AG04450 (cell line): ENCODE measurements at regions of chr18 and their contacts with region 1.

Region 1: DNA sequence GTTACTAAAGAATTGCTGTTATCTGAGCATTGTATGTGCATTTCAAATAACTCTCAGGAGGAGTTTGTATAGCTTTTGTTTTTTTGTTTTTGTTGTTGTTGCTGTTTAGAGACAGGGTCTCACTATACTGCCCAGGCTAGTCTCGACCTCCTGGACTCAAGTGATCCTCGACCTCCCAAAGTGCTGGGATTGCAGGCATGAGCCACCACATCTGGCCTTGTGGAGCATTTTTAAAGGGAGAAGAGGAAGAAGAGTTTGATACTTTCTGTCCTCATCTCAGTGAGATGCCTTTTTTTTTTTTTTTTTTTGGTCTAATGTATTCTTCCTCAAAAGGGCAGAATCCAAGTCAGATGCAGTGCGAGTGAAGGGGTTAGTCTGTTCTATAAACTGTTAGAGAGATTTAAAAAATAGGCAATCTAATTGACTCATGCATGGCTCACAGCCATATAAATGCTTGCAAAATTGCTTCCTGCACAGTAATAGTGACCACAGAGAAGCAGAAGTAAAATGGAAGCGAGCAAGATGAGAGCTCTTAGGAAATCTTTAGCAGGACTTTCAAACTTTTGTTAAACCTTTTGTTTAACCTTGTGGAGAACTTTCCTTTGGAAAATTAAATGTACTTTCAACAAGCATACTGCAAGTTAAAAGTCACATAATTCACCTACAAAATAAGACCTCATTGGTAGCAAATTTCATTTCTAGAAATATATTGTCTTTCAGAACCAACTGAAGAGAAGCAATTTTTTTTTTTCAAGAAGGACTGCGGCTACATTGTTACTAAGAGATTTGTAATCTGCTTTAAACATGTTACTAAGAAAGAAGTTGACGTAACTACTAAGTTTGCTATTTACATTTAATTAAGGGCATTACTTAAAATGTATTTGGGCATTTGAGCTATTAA is 52.3 kb upstream of the ROCK1 start:
- DNase-seq: peak; percentile 80
- H3K4me3 ChIP-seq: peak overlapping the region; percentile 15; the same call in 1 of the 2 replicates
- H3K27ac ChIP-seq: peak overlapping the region; percentile 93
- H3K27me3 ChIP-seq: no peaks in the 10 kb centered on the region
- CTCF ChIP-seq: no peak

Region 2: DNA sequence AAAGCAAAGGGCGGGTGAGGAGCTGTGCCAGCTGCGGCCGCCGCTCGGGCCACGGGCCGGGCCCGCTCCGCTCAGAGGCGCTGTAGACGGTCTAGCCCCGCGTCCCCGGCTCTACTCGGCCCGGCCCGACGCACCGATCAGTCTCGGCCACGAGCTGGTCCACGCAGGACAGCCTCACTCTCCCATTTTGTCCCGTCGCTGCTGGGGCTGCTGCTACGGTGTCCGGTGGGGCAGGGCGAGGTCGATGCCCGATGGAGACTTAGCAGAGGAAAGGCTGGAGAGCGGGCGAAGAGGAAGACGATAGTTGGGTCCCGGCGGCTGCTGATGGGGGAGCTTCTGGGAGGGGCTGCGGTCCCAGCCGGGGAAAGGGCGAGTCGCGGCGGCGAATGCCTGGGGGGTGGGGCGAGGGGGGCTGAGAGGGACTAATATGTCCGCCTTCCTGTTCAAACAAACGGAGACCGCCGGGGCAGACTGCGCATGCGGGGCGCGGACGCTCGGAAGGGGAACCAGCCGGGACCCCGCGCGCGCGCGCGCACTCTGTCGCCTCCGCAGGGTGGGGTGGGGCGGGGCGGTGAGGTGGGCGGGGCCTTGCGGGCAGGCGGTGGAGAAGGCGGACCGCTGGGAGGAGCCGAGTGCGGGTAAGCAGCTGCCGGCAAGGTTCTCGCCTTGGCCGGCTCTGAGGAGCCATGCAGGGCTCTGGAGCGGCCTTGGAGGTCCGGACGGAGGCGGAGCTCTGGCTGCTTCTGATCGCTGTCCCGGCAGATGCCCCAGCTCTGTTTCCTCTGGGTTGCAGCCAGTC is 52.4 kb before region 1 on chr18 and contains the start of gene ROCK1:
- CTCF ChIA-PET with region 1: no interaction called
- POLR2A ChIA-PET with region 1: interaction called, 28 read pairs
- DNase-seq: peak; percentile 95
- H3K4me3 ChIP-seq: peak within 1 kb of the TSS; percentile 98
- H3K27ac ChIP-seq: peak within 1 kb of the TSS; percentile 94
- H3K27me3 ChIP-seq: no peaks in the 10 kb centered on the region
- CTCF ChIP-seq: no peak
- polyA plus RNA-seq, gene ROCK1: 28.5 and 37.2 TPM in 2 replicates

Region 3: DNA sequence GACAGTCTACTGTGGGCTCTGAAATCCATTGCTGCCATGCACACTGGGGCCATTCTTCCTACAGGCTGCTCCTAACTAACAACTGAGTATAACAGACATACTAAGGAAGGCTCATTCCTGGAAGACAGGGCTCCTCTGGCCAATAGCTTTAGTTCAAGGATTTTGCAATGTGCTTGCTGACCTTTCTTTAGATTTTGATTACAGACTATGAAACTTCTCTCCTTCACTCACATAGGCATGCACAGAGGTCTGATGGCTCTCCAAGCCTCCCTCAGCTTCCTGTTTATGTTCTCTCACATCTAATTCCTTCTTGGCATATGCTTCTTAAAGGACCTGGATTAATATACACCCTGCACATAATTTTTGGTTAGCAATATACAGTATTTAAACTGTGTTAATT is 17.9 kb before region 1 on chr18:
- CTCF ChIA-PET with region 1: no interaction called
- POLR2A ChIA-PET with region 1: interaction called, 10 read pairs
- DNase-seq: no peak
- H3K4me3 ChIP-seq: no peak overlapping the region
- H3K27ac ChIP-seq: no peak overlapping the region
- H3K27me3 ChIP-seq: no peaks in the 10 kb centered on the region
- CTCF ChIP-seq: no peak